ENCODE measurements at regions of chr19 and their contacts with region 1.

Region 1: DNA sequence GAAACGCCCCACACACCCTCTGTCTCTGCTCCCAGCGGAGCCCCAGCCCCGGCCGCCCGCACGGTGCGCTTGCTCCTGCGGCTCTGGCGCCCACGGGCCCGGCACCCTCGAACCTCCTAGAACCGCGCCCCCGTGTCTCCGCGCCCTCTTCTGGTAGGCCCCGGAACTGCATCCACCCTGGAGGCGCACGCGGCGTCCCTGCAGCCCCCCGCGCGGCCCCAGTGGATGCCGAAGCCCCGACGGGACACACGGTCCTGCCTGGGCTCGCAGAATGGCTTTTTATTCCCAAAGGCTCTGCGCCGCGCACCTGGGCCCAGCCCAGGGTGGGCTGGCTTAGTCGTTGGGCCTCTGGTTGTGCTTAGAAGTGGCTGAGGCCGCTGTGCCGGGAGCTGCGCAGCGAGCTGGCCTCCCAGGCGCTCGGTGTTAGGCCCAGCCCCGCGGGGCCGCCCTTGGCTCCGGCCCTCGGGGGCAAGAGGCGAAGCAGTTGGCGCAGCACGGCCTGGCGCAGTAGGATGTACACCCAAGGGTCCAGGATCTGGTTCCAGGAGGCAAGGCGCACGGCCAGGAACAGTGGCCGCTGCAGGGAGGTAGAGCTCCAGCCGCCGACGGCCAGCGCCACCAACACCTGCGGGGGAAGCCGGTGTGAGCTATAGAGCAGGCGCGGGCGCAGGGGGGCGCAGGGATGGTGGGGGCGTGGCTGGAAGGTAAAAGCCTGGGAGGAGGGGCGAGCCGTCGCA is 2.8 kb downstream of the PTGER1 start:
- DNase-seq: peak; percentile 51
- H3K4me3 ChIP-seq: no peak overlapping the region
- H3K27ac ChIP-seq: no peak overlapping the region
- H3K4me1 ChIP-seq: no peaks in the 10 kb centered on the region
- CTCF ChIP-seq: peak; percentile 84

Region 2: DNA sequence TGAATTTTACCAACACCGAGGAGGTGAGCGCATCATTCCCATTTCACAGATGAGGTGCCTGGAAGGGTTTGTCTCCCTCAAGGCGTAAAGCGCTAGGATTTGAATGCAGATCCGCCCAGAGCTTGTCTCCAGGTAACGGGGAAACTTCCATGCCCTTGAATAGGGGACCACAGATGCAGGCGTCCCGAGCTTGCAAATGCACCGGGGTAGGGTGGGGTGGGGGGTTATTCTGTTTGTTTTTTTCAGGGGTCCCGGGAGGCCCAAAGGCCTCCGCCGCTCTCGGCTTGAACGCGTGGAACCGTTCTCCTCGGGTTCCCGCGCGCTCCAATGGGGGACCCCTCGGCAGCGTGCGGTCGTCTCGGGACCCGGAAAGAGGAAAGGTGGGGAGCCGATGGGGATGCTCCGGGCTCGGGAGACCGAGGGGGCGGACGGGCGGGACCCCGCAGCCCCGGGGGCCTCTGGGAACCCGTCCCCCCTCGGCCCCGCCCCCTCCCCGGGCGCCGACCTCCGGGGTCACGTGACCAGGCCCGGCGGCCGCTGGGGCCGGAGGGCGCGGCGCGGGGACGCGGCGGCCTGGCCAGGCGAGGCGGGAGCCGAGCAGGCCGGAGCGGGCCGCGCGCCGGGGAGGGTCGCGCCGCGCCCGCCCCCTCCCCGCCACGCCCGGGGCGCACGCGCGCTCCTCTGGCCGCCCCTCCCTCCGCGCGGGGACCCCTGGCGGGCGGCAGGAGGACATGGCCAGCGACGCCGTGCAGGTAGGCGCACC is 39.4 kb before region 1 on chr19 and contains the start of gene PKN1:
- CTCF ChIA-PET with region 1: interaction called, 4 read pairs
- POLR2A ChIA-PET with region 1: no interaction called
- intact Hi-C with region 1: loop called (anchors 2 kb)
- DNase-seq: peak; percentile 85
- H3K4me3 ChIP-seq: peak within 1 kb of the TSS; percentile 90
- H3K27ac ChIP-seq: peak within 1 kb of the TSS; percentile 60
- H3K4me1 ChIP-seq: peaks cover 45% of the 10 kb centered on the region
- CTCF ChIP-seq: no peak
- total RNA-seq, gene PKN1: 117 and 125 TPM in 2 replicates

Region 3: GRCh38 chr19:14496028-14496833 is 23.9 kb after region 1 on chr19 and contains the start of gene GIPC1:
- CTCF ChIA-PET with region 1: no interaction called
- POLR2A ChIA-PET with region 1: no interaction called
- intact Hi-C with region 1: loop called (anchors 1 kb)
- DNase-seq: peak; percentile 85
- H3K4me3 ChIP-seq: peak within 1 kb of the TSS; percentile 72
- H3K27ac ChIP-seq: no peak within 1 kb of the TSS
- H3K4me1 ChIP-seq: peaks cover 19% of the 10 kb centered on the region
- CTCF ChIP-seq: no peak
- total RNA-seq, gene GIPC1: 18.5 and 26.9 TPM in 2 replicates